ENCODE measurements at regions of chr1 and their contacts with region 1.

Region 1: GRCh38 chr1:116737020-116737854 is 17.0 kb upstream of the CD2 start:
- DNase-seq: peak; percentile 72 to 82 (median 78)
- ATAC-seq: peak; percentile 92
- H3K4me3 ChIP-seq: no peak overlapping the region
- H3K27ac ChIP-seq: no peak overlapping the region
- H3K4me1 ChIP-seq: peaks cover 0 to 8% of the 10 kb centered on the region in 2 experiments; a peak in 2 of 5 replicates
- H3K27me3 ChIP-seq: no peaks in the 10 kb centered on the region
- CTCF ChIP-seq: peak; percentile 95 to 97 (median 97)
- EP300 ChIP-seq: no peak
- POLR2A ChIP-seq: no peak
- RAD21 ChIP-seq: peak; percentile 99

Region 2: DNA sequence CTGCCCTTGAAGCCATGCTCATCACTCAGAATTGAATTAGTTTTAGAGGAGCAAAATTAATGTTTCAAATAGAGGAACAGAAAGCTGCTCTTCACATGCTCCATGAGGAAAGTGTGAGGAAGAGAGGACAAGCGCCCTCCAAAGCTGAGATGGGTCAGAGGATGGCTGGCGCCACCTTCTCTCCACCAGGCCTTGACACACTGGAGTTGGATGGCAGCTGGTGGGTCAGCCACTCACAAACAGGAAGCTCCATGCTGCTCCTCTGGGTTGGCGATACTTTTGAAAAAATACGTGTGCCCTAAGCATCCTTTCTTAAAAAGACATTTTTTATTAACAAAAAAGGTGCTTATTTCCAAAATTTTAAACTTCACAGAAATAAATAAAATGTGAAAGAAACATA is 13.9 kb after region 1 on chr1:
- CTCF ChIA-PET with region 1: no interaction called
- POLR2A ChIA-PET with region 1: interaction called, 11 read pairs
- in situ Hi-C with region 1: no loop called
- intact Hi-C with region 1: no loop called
- DNase-seq: no peak
- ATAC-seq: no peak
- H3K4me3 ChIP-seq: no peak overlapping the region
- H3K27ac ChIP-seq: no peak overlapping the region
- H3K4me1 ChIP-seq: no peaks in the 10 kb centered on the region; a peak in 2 of 5 replicates
- H3K27me3 ChIP-seq: no peaks in the 10 kb centered on the region
- CTCF ChIP-seq: no peak
- EP300 ChIP-seq: no peak
- POLR2A ChIP-seq: no peak
- RAD21 ChIP-seq: no peak

Region 3: GRCh38 chr1:116817582-116818064 is 80.4 kb after region 1 on chr1:
- CTCF ChIA-PET with region 1: interaction called, 14 read pairs
- POLR2A ChIA-PET with region 1: no interaction called
- in situ Hi-C with region 1: loop called (anchors 5 kb)
- intact Hi-C with region 1: loop called (anchors 1 kb)
- DNase-seq: peak; percentile 86 to 96 (median 92)
- ATAC-seq: peak; percentile 99
- H3K4me3 ChIP-seq: no peak overlapping the region
- H3K27ac ChIP-seq: no peak overlapping the region
- H3K4me1 ChIP-seq: no peaks in the 10 kb centered on the region; a peak in 1 of 5 replicates
- H3K27me3 ChIP-seq: no peaks in the 10 kb centered on the region
- CTCF ChIP-seq: peak; percentile 96 to 98 (median 98)
- EP300 ChIP-seq: 0 out of 2 replicates have a peak, but pooled peaks have one; percentile 10
- POLR2A ChIP-seq: no peak
- RAD21 ChIP-seq: peak; percentile 83 to 97

Region 4: DNA sequence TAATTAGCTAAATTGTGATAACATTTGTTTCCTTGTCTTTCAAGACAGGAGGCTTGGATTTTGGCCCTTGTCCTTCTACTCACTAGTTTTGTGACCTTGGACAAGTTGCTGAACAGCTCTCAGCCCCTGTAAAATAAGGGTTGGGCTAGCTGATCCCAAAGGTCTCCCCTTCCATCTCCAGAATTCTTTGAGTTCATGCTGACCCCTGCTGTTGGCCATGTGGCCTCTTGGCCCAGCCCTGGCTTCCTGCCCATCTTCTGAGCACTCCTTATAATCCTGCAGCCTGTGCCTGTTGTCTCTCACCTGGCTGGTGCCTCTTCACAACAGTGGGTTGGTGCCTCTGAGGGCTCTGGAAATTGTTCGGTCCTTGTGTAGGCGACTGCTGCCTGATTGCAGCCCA is 182.6 kb after region 1 on chr1:
- CTCF ChIA-PET with region 1: interaction called, 10 read pairs
- POLR2A ChIA-PET with region 1: interaction called, 5 read pairs
- in situ Hi-C with region 1: no loop called
- intact Hi-C with region 1: loop called (anchors 5 kb)
- DNase-seq: peak; percentile 31 to 72 (median 52)
- ATAC-seq: peak; percentile 68
- H3K4me3 ChIP-seq: no peak overlapping the region
- H3K27ac ChIP-seq: no peak overlapping the region
- H3K4me1 ChIP-seq: peaks cover 24 to 61% of the 10 kb centered on the region in 2 experiments
- H3K27me3 ChIP-seq: no peaks in the 10 kb centered on the region
- CTCF ChIP-seq: peak; percentile 23 to 61 (median 54); a peak in 4 of 6 replicates
- EP300 ChIP-seq: no peak
- POLR2A ChIP-seq: no peak
- RAD21 ChIP-seq: peak; percentile 66 to 79

Region 5: GRCh38 chr1:117051224-117052064 is 314.2 kb after region 1 on chr1:
- CTCF ChIA-PET with region 1: interaction called, 30 read pairs
- POLR2A ChIA-PET with region 1: no interaction called
- in situ Hi-C with region 1: loop called (anchors 5 kb)
- intact Hi-C with region 1: loop called (anchors 1 kb)
- DNase-seq: peak in 1 of 4 experiments; percentile 30
- ATAC-seq: peak; percentile 71
- H3K4me3 ChIP-seq: no peak overlapping the region
- H3K27ac ChIP-seq: peak overlapping the region; percentile 16
- H3K4me1 ChIP-seq: no peaks in the 10 kb centered on the region; a peak in 2 of 5 replicates
- H3K27me3 ChIP-seq: no peaks in the 10 kb centered on the region
- CTCF ChIP-seq: no peak
- EP300 ChIP-seq: no peak
- POLR2A ChIP-seq: no peak
- RAD21 ChIP-seq: no peak

Region 6: GRCh38 chr1:117121776-117122697 is 384.8 kb after region 1 on chr1:
- CTCF ChIA-PET with region 1: no interaction called
- POLR2A ChIA-PET with region 1: no interaction called
- in situ Hi-C with region 1: no loop called
- intact Hi-C with region 1: loop called (anchors 10 kb)
- DNase-seq: peak; percentile 96 to 97 (median 96)
- ATAC-seq: peak; percentile 98
- H3K4me3 ChIP-seq: peak overlapping the region; percentile 51
- H3K27ac ChIP-seq: peak overlapping the region; percentile 82
- H3K4me1 ChIP-seq: peaks cover 6 to 17% of the 10 kb centered on the region in 2 experiments; a peak in 4 of 5 replicates
- H3K27me3 ChIP-seq: peaks cover 6% of the 10 kb centered on the region in 2 experiments; a peak in 1 of 5 replicates
- CTCF ChIP-seq: peak; percentile 77 to 88 (median 81)
- EP300 ChIP-seq: no peak
- POLR2A ChIP-seq: peak; percentile 79
- RAD21 ChIP-seq: peak; percentile 62 to 70